ENCODE measurements at regions of chr1 and their contacts with region 1.

Region 1: GRCh38 chr1:117512743-117513321 is 93.0 kb upstream of the TENT5C start:
- DNase-seq: no peak
- H3K4me3 Mint-ChIP-seq: no peak overlapping the region
- H3K27ac Mint-ChIP-seq: no peak overlapping the region
- H3K4me1 Mint-ChIP-seq: peaks cover 2% of the 10 kb centered on the region
- H3K27me3 Mint-ChIP-seq: no peaks in the 10 kb centered on the region

Region 2: DNA sequence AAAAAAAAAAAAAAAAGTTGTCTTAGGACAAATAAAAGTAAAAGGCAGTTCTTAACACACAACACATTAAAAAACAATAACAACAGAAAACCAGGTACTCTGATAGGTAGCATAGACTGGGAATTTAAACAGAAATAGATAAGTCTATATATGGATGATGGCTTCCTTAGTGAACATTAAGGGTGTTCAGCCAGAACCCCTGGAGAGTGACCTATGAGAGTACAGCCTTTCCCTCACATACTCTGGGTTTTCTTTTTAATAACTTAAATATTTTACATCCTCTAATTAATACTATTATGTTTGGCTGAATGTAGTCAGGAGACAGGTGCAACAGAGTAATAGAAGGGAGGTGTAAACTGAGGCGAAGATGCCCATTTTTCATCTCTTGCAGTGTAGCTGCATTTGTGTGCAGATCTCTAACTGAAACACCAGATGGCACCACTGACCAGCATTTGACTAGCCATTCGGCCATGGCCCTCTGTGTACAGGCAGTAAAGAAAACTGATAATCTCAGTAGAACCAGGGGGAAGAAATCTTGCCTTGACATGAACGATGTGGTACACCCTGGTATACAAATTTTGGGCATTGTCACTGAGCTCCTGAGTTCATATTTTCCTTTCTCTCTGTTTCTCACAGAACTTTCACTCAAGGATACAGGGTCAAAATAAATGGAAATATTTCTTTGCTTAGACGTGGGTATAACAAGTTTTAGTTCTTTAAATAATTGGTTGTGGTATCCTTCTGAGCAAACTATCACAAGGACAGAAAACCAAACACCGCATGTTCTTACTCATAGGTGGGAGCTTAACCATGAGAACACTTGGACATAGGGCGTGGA is 445.1 kb before region 1 on chr1:
- CTCF ChIA-PET with region 1: no interaction called
- intact Hi-C with region 1: loop called (anchors 5 kb)
- DNase-seq: peak; percentile 58
- H3K4me3 Mint-ChIP-seq: no peak overlapping the region
- H3K27ac Mint-ChIP-seq: no peak overlapping the region
- H3K4me1 Mint-ChIP-seq: peaks cover 39% of the 10 kb centered on the region
- H3K27me3 Mint-ChIP-seq: no peaks in the 10 kb centered on the region

Region 3: DNA sequence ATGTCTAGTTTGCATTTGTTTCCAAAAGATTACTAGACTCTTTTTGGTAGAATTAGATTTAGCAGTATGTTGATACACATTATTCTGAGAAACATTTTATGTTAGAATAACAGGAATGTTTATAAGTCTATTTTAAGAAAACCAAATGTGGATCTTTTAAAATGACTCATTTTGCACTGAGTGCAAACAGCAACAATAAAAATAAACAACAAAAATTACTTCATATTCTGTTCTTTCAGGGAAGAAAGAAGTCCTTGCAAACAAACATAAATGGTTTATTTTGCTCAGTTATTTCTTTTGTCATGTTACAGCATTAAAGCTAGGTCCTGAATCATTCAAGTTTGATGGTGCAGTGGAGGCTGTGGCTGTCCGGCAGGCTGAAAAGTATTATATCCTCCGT is 13.8 kb before region 1 on chr1:
- CTCF ChIA-PET with region 1: no interaction called
- intact Hi-C with region 1: loop called (anchors 2 kb)
- DNase-seq: no peak
- H3K4me3 Mint-ChIP-seq: no peak overlapping the region
- H3K27ac Mint-ChIP-seq: no peak overlapping the region
- H3K4me1 Mint-ChIP-seq: no peaks in the 10 kb centered on the region
- H3K27me3 Mint-ChIP-seq: no peaks in the 10 kb centered on the region

Region 4: DNA sequence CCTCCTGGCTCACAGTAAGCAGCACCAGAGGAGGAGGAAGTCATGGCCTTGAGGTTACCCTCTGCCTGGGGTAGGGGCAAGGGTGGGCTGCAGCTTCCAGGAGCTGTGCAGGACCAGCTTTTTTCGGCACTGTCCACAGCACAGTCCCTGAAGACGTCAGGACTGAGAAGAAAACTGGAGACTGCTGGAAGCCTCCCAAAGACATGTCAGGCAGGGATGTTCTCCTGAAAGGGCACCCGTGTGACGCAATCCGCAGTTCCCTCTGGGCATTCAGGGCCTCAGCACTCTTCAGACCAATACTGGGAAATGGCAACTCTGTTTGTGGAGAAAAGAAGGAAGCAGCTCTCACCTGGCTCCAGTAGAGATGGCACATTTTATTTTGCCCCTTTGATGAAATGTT is 28.2 kb after region 1 on chr1:
- CTCF ChIA-PET with region 1: interaction called, 48 read pairs
- intact Hi-C with region 1: loop called (anchors 1 kb)
- DNase-seq: no peak
- H3K4me3 Mint-ChIP-seq: no peak overlapping the region
- H3K27ac Mint-ChIP-seq: no peak overlapping the region
- H3K4me1 Mint-ChIP-seq: peaks cover 19% of the 10 kb centered on the region
- H3K27me3 Mint-ChIP-seq: no peaks in the 10 kb centered on the region

Region 5: GRCh38 chr1:117674521-117675397 is 161.9 kb after region 1 on chr1:
- CTCF ChIA-PET with region 1: interaction called, 9 read pairs
- intact Hi-C with region 1: loop called (anchors 1 kb)
- DNase-seq: peak; percentile 73
- H3K4me3 Mint-ChIP-seq: no peak overlapping the region
- H3K27ac Mint-ChIP-seq: peak overlapping the region; percentile 46
- H3K4me1 Mint-ChIP-seq: peaks cover 4% of the 10 kb centered on the region
- H3K27me3 Mint-ChIP-seq: peaks cover 11% of the 10 kb centered on the region

Region 6: GRCh38 chr1:117895482-117896114 is 382.8 kb after region 1 on chr1:
- CTCF ChIA-PET with region 1: interaction called, 6 read pairs
- intact Hi-C with region 1: loop called (anchors 1 kb)
- DNase-seq: peak; percentile 80
- H3K4me3 Mint-ChIP-seq: no peak overlapping the region
- H3K27ac Mint-ChIP-seq: no peak overlapping the region
- H3K4me1 Mint-ChIP-seq: no peaks in the 10 kb centered on the region
- H3K27me3 Mint-ChIP-seq: no peaks in the 10 kb centered on the region